Activated T-helper 1 cell treated with anti-CD3 and anti-CD28 coated beads, Interleukin-12 subunit alpha, Interleukin-12 subunit beta, Interleukin-2, Interleukin-4 antibody, amounts not matched to agents 30 ng/mL and 10 ng/mL and 1 ng/mL, durations not matched to agents 14 hours and 24 hours and 36 hours (primary cell): ENCODE measurements at regions of chr19 and their contacts with region 1.

Region 1: GRCh38 chr19:35775298-35776110 is at the start of gene ARHGAP33:
- DNase-seq: peak; percentile 99
- H3K4me3 Mint-ChIP-seq: peak within 1 kb of the TSS; percentile 85
- H3K27ac Mint-ChIP-seq: peak within 1 kb of the TSS; percentile 61
- H3K4me1 Mint-ChIP-seq: peaks cover 29% of the 10 kb centered on the region
- H3K27me3 Mint-ChIP-seq: no peaks in the 10 kb centered on the region
- total RNA-seq, gene ARHGAP33: 24.5 and 25.8 TPM in 2 replicates

Region 2: DNA sequence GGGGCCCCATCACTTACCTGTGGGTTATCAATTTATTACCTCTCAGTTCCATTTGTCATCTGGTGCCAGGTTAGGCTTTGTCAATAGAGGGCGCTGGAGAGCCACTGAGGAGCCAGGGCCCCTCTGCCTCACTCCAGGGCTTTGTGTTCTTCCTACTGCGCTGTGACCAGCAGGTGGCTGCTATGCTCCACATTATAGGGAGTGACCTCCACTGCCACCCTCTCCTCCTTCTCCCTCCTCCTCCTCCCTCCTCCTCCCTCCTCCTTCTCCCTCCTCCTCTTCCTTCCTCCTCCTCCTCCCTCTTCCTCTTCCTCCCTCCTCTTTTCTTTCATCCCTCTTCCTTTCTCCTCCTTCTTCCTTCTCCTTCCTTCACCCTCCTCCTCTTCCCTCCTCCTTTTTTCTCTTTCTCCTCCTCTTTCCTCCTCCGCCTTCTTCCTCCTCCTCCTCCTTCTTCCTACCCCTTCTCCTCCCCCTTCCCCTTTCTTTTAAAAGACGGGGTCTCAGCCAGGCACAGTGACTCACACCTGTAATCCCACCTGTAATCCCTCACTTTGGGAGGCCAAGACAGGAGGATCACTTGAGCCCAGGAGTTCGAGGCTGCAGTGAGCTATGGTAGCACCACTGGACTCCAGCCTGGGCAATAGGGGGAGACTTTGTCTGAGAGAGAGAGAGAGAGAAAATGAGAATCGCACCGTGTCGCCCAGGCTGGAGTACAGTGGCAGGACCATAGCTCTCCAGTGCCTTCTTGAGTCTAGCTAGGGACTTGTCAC is 81.5 kb before region 1 on chr19:
- intact Hi-C with region 1: loop called (anchors 1 kb)
- DNase-seq: peak; percentile 86
- H3K4me3 Mint-ChIP-seq: no peak overlapping the region
- H3K27ac Mint-ChIP-seq: peak overlapping the region; percentile 38
- H3K4me1 Mint-ChIP-seq: peaks cover 27% of the 10 kb centered on the region
- H3K27me3 Mint-ChIP-seq: no peaks in the 10 kb centered on the region

Region 3: DNA sequence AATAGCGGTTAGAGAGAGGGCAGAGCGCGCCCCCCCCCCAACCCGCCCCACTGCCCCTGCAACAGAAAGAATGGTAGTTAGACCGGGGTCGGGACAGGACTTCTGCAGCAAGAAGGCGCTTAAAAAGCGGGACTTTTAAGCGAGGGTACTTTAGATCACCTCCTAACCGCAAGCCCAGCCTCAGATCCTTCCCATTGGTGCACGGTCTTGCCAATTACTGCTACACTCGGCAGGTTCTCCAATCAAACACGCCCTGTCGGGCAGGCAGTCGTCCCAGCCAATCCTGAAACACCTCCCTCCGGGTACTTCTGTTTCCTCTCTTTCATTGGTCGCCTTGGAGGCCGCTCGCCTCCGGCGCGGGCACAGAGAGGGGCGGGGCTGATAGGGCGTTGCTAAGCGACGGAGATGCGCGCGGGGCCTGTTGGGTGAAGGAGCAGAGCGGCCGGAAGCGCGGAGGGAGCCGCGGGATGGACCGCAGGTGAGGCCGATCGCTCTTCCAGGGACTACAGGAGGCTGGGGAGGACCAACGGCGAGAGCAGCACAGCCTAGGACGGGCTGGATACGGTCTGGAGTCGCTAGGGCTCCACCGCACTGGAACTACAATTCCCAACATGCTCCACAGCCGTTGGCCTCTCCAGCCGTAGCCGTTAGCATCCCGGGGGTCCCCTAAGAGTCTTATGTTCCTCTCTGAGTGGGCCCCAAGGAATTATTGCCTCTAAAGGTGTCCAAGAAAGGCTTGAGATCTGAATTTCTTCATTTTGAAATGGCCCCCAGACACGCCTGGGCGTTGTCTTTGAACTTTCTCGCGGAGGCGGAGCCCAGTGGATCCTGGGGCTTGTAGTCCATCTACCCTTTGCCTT is 17.5 kb before region 1 on chr19 and contains the start of gene PROSER3:
- intact Hi-C with region 1: loop called (anchors 1 kb)
- DNase-seq: peak; percentile 99
- H3K4me3 Mint-ChIP-seq: peak within 1 kb of the TSS; percentile 89
- H3K27ac Mint-ChIP-seq: peak within 1 kb of the TSS; percentile 90
- H3K4me1 Mint-ChIP-seq: peaks cover 29% of the 10 kb centered on the region
- H3K27me3 Mint-ChIP-seq: no peaks in the 10 kb centered on the region
- total RNA-seq, gene PROSER3: 39.5 and 45.1 TPM in 2 replicates

Region 4: GRCh38 chr19:35869327-35870123 is 94.0 kb after region 1 on chr19:
- intact Hi-C with region 1: loop called (anchors 1 kb)
- DNase-seq: peak; percentile 85
- H3K4me3 Mint-ChIP-seq: peak overlapping the region; percentile 81
- H3K27ac Mint-ChIP-seq: peak overlapping the region; percentile 42
- H3K4me1 Mint-ChIP-seq: peaks cover 23% of the 10 kb centered on the region
- H3K27me3 Mint-ChIP-seq: peaks cover 26% of the 10 kb centered on the region